ENCODE measurements at regions of chrX and their contacts with region 1.

Region 1: GRCh38 chrX:76202471-76202870 is 29.6 kb downstream of the PBDC1 start:
- DNase-seq: no peak
- ATAC-seq: no peak
- H3K4me3 ChIP-seq: no peak overlapping the region
- H3K4me3 Mint-ChIP-seq: no peak overlapping the region
- H3K27ac ChIP-seq: no peak overlapping the region
- H3K27ac Mint-ChIP-seq: no peak overlapping the region
- H3K4me1 ChIP-seq: no peaks in the 10 kb centered on the region
- H3K4me1 Mint-ChIP-seq: peaks cover 10% of the 10 kb centered on the region
- H3K27me3 ChIP-seq: no peaks in the 10 kb centered on the region
- H3K27me3 Mint-ChIP-seq: no peaks in the 10 kb centered on the region
- CTCF ChIP-seq: no peak

Region 2: DNA sequence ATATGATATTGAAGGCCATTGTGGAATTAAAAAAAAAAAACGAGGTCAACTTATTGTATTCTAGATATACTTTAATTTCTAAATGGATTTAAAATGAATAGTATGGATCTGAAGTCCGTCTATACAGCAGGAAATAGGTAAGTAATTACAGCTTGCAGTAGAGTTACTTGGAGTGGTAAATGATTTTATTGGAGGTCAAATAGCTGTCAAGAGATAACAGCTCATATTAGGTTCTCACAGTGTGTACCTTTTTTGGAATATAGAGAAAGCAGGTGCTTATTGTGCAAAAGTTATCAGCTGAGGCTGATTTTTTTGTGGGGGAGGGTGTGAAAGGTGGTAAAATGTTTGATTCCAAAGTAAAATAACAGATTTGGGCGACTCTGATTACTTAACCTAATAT is 910.9 kb before region 1 on chrX:
- CTCF ChIA-PET with region 1: no interaction called
- POLR2A ChIA-PET with region 1: no interaction called
- intact Hi-C with region 1: no loop called
- DNase-seq: no peak
- ATAC-seq: no peak
- H3K4me3 ChIP-seq: no peak overlapping the region
- H3K4me3 Mint-ChIP-seq: no peak overlapping the region
- H3K27ac ChIP-seq: no peak overlapping the region
- H3K27ac Mint-ChIP-seq: no peak overlapping the region
- H3K4me1 ChIP-seq: no peaks in the 10 kb centered on the region
- H3K4me1 Mint-ChIP-seq: peaks cover 31% of the 10 kb centered on the region
- H3K27me3 ChIP-seq: no peaks in the 10 kb centered on the region
- H3K27me3 Mint-ChIP-seq: no peaks in the 10 kb centered on the region
- CTCF ChIP-seq: no peak

Region 3: GRCh38 chrX:76220856-76221255 is 18.4 kb after region 1 on chrX:
- CTCF ChIA-PET with region 1: no interaction called
- POLR2A ChIA-PET with region 1: no interaction called
- intact Hi-C with region 1: loop called in 1 of 2 experiments (anchors 2 kb)
- DNase-seq: no peak
- ATAC-seq: no peak
- H3K4me3 ChIP-seq: no peak overlapping the region
- H3K4me3 Mint-ChIP-seq: no peak overlapping the region
- H3K27ac ChIP-seq: no peak overlapping the region
- H3K27ac Mint-ChIP-seq: no peak overlapping the region
- H3K4me1 ChIP-seq: no peaks in the 10 kb centered on the region
- H3K4me1 Mint-ChIP-seq: no peaks in the 10 kb centered on the region
- H3K27me3 ChIP-seq: no peaks in the 10 kb centered on the region
- H3K27me3 Mint-ChIP-seq: no peaks in the 10 kb centered on the region
- CTCF ChIP-seq: no peak